ENCODE measurements at regions of chr3 and their contacts with region 1.

Region 1: GRCh38 chr3:148943506-148944205 is 47.7 kb upstream of the GYG1 start:
- DNase-seq: no peak
- H3K4me3 ChIP-seq: no peak overlapping the region
- H3K27ac ChIP-seq: no peak overlapping the region
- H3K4me1 ChIP-seq: no peaks in the 10 kb centered on the region
- H3K27me3 ChIP-seq: no peaks in the 10 kb centered on the region
- CTCF ChIP-seq: peak; percentile 22 to 74 (median 56)
- POLR2A ChIP-seq: no peak

Region 2: GRCh38 chr3:148648685-148649352 is 294.8 kb before region 1 on chr3:
- intact Hi-C with region 1: no loop called
- DNase-seq: no peak
- H3K4me3 ChIP-seq: no peak overlapping the region
- H3K27ac ChIP-seq: no peak overlapping the region
- H3K4me1 ChIP-seq: no peaks in the 10 kb centered on the region
- H3K27me3 ChIP-seq: no peaks in the 10 kb centered on the region
- CTCF ChIP-seq: no peak
- POLR2A ChIP-seq: no peak

Region 3: GRCh38 chr3:148861277-148861869 is 82.3 kb before region 1 on chr3:
- intact Hi-C with region 1: loop called (anchors 5 kb)
- DNase-seq: no peak
- H3K4me3 ChIP-seq: no peak overlapping the region
- H3K27ac ChIP-seq: no peak overlapping the region
- H3K4me1 ChIP-seq: no peaks in the 10 kb centered on the region
- H3K27me3 ChIP-seq: peaks cover 0 to 5% (median 0%) of the 10 kb centered on the region in 4 donors
- CTCF ChIP-seq: peak; percentile 34 to 81 (median 66)
- POLR2A ChIP-seq: no peak

Region 4: GRCh38 chr3:148884261-148884660 is 59.4 kb before region 1 on chr3:
- intact Hi-C with region 1: no loop called
- DNase-seq: no peak
- H3K4me3 ChIP-seq: no peak overlapping the region
- H3K27ac ChIP-seq: no peak overlapping the region
- H3K4me1 ChIP-seq: no peaks in the 10 kb centered on the region
- H3K27me3 ChIP-seq: no peaks in the 10 kb centered on the region
- CTCF ChIP-seq: no peak
- POLR2A ChIP-seq: no peak

Region 5: DNA sequence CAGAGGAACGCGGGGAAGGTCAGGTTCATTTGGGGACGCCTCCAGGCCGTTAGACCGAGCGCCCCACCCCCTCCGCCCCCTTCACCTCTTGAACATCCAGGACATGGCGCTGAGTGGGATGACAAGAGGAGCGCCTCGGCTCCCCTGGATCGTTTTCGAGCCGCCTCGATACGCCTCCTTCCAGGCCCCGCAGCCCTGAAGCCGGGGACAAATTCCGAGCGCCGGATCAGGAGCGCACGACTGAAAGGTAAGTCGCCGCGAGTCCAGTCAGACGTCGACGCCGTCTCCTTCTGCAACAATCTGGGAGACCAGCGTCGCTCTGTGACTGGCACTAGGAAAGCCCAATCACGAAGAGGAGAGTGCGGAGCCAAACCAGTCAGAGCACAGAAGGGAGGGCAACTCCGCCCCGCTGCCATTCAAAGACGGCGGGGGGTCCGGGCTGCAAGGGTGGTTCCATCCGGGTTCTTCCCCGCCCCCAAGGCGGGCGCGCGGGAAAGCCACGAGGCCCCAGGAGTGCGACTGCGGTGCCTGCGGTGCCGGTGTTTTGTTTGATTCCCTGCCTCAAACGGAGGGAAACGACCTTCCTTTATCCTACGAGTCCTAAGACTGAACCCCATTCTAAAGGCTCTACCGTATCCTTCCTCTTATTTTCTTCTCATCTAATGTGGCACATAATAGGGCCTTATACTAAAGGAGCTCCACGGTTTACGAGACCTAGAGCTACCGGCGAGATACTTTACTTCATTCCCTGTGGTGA is 142.8 kb after region 1 on chr3 and contains the start of gene HLTF:
- intact Hi-C with region 1: no loop called
- DNase-seq: peak; percentile 65
- H3K4me3 ChIP-seq: peak within 1 kb of the TSS; percentile 61 to 78 (median 72)
- H3K27ac ChIP-seq: peak within 1 kb of the TSS; percentile 69 to 83 (median 80)
- H3K4me1 ChIP-seq: peaks cover 4 to 27% (median 9%) of the 10 kb centered on the region in 3 donors
- H3K27me3 ChIP-seq: no peaks in the 10 kb centered on the region
- CTCF ChIP-seq: no peak
- POLR2A ChIP-seq: peak in 2 of 4 donors; percentile 19 to 55
- total RNA-seq, gene HLTF: 5.2 to 12.4 (median 8.1) TPM

Region 6: DNA sequence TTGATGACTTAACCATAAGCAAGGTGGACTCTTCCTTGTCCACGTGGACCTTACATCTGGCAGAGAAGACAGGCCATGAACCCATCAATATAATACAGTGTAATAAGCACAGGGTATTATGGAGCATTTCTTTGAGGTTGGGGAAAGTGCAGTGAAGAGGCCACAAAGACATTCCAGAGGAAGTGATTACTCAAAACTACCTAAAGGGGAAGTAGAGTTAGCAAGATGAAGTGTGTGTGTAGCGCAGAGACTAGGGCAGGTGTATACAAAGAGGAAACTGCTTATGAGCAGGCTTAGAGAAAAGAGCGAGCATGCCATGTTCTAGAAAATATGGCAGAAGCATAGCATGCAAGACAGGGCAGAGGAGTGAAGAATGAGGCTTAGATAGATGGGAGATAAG is 260.1 kb after region 1 on chr3:
- intact Hi-C with region 1: no loop called
- DNase-seq: no peak
- H3K4me3 ChIP-seq: no peak overlapping the region
- H3K27ac ChIP-seq: no peak overlapping the region
- H3K4me1 ChIP-seq: no peaks in the 10 kb centered on the region
- H3K27me3 ChIP-seq: no peaks in the 10 kb centered on the region
- CTCF ChIP-seq: no peak
- POLR2A ChIP-seq: no peak

Measured in esophagus squamous epithelium (tissue), 5 donors.